WTC11 (cell line): ENCODE measurements at regions of chr4 and their contacts with region 1.

Region 1: GRCh38 chr4:42282081-42282901 is 115.0 kb upstream of the SHISA3 start:
- DNase-seq: peak; percentile 41
- ATAC-seq: peak; percentile 83
- H3K4me3 Mint-ChIP-seq: peak overlapping the region; percentile 9; the same call in 1 of the 2 replicates
- H3K27ac Mint-ChIP-seq: no peak overlapping the region
- H3K4me1 Mint-ChIP-seq: peaks cover 34% of the 10 kb centered on the region
- H3K27me3 Mint-ChIP-seq: peaks cover 3% of the 10 kb centered on the region; the same call in 1 of the 2 replicates
- CTCF ChIP-seq: peak; percentile 69

Region 2: GRCh38 chr4:42262701-42263490 is 19.4 kb before region 1 on chr4:
- CTCF ChIA-PET with region 1: no interaction called
- POLR2A ChIA-PET with region 1: no interaction called
- DNase-seq: no peak
- ATAC-seq: no peak
- H3K4me3 Mint-ChIP-seq: no peak overlapping the region
- H3K27ac Mint-ChIP-seq: peak overlapping the region; percentile 83
- H3K4me1 Mint-ChIP-seq: peaks cover 22% of the 10 kb centered on the region
- H3K27me3 Mint-ChIP-seq: peaks cover 6% of the 10 kb centered on the region; the same call in 1 of the 2 replicates
- CTCF ChIP-seq: no peak

Region 3: DNA sequence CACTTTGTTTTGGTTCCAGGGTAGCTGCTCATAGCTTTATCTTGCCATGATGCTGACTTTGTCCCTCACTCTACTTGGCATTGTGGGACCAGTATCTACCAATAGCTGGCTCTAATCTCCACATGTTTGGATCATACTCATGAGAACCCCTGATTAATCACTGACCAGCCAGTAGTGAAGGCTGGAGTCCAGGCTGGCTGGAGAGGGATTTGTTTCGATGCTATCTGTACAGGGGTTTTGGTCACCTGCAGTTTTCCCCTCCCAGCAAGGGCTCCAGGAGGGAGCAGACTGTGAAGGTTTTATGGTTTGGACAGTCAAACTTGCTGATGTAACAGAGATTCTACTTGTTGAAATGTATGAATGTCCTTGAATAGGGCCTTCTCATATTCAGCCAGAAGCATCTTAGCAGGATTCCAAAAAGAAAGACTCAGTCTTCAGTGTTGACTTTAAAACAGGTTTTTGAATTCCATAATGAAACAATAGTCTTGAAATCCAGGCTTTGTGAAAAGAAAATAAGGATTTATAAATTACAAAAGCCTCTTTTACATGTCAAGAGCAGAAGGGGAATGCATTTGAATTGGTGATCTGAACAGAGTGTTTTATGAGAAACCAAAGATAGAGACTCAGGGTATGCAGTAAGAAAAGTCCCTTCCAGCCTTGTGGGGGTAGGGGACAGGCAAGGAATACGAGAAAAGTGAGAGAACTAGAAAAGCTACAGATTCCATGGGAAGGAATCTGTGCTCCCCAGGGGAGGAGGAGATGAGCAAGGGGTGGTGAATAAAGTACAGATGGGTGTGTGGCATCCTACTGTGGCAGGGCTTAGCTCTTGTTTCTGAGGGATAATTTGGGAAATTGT is 11.9 kb after region 1 on chr4:
- CTCF ChIA-PET with region 1: interaction called, 23 read pairs
- POLR2A ChIA-PET with region 1: interaction called, 6 read pairs
- DNase-seq: no peak
- ATAC-seq: peak; percentile 90
- H3K4me3 Mint-ChIP-seq: peak overlapping the region; percentile 16
- H3K27ac Mint-ChIP-seq: peak overlapping the region; percentile 97
- H3K4me1 Mint-ChIP-seq: peaks cover 67% of the 10 kb centered on the region
- H3K27me3 Mint-ChIP-seq: peaks cover 20% of the 10 kb centered on the region
- CTCF ChIP-seq: no peak